ENCODE measurements at regions of chr15 and their contacts with region 1.

Region 1: GRCh38 chr15:79572691-79573404 is 140.7 kb downstream of the MINAR1 start:
- DNase-seq: no peak
- ATAC-seq: no peak
- H3K4me3 ChIP-seq: no peak overlapping the region
- H3K27ac ChIP-seq: no peak overlapping the region
- H3K4me1 ChIP-seq: no peaks in the 10 kb centered on the region
- H3K27me3 ChIP-seq: peaks cover 25% of the 10 kb centered on the region
- CTCF ChIP-seq: no peak

Region 2: GRCh38 chr15:78241007-78241406 is 1331.8 kb before region 1 on chr15:
- CTCF ChIA-PET with region 1: no interaction called
- POLR2A ChIA-PET with region 1: no interaction called
- intact Hi-C with region 1: no loop called
- DNase-seq: peak; percentile 81
- ATAC-seq: peak; percentile 98
- H3K4me3 ChIP-seq: no peak overlapping the region
- H3K27ac ChIP-seq: no peak overlapping the region
- H3K4me1 ChIP-seq: no peaks in the 10 kb centered on the region
- H3K27me3 ChIP-seq: no peaks in the 10 kb centered on the region
- CTCF ChIP-seq: peak; percentile 78

Region 3: GRCh38 chr15:79540558-79540957 is 32.3 kb before region 1 on chr15:
- CTCF ChIA-PET with region 1: no interaction called
- POLR2A ChIA-PET with region 1: no interaction called
- intact Hi-C with region 1: no loop called
- DNase-seq: peak; percentile 18
- ATAC-seq: no peak
- H3K4me3 ChIP-seq: no peak overlapping the region
- H3K27ac ChIP-seq: no peak overlapping the region
- H3K4me1 ChIP-seq: no peaks in the 10 kb centered on the region
- H3K27me3 ChIP-seq: peaks cover 14% of the 10 kb centered on the region; the same call in 1 of the 2 replicates
- CTCF ChIP-seq: peak; percentile 28; the same call in 1 of the 2 replicates

Region 4: GRCh38 chr15:79689030-79689429 is 116.2 kb after region 1 on chr15:
- CTCF ChIA-PET with region 1: no interaction called
- POLR2A ChIA-PET with region 1: no interaction called
- intact Hi-C with region 1: no loop called
- DNase-seq: no peak
- ATAC-seq: no peak
- H3K4me3 ChIP-seq: no peak overlapping the region
- H3K27ac ChIP-seq: no peak overlapping the region
- H3K4me1 ChIP-seq: no peaks in the 10 kb centered on the region
- H3K27me3 ChIP-seq: no peaks in the 10 kb centered on the region
- CTCF ChIP-seq: no peak

Region 5: GRCh38 chr15:79901958-79902357 is 329.1 kb after region 1 on chr15:
- CTCF ChIA-PET with region 1: no interaction called
- POLR2A ChIA-PET with region 1: interaction called, 22 read pairs
- intact Hi-C with region 1: no loop called
- DNase-seq: no peak
- ATAC-seq: no peak
- H3K4me3 ChIP-seq: no peak overlapping the region
- H3K27ac ChIP-seq: no peak overlapping the region
- H3K4me1 ChIP-seq: peaks cover 7% of the 10 kb centered on the region
- H3K27me3 ChIP-seq: no peaks in the 10 kb centered on the region
- CTCF ChIP-seq: no peak

Region 6: GRCh38 chr15:80093854-80094418 is 521.1 kb after region 1 on chr15:
- CTCF ChIA-PET with region 1: no interaction called
- POLR2A ChIA-PET with region 1: no interaction called
- intact Hi-C with region 1: no loop called
- DNase-seq: peak; percentile 67
- ATAC-seq: peak; percentile 66
- H3K4me3 ChIP-seq: no peak overlapping the region
- H3K27ac ChIP-seq: peak overlapping the region; percentile 28; the same call in 1 of the 2 replicates
- H3K4me1 ChIP-seq: peaks cover 9% of the 10 kb centered on the region
- H3K27me3 ChIP-seq: no peaks in the 10 kb centered on the region
- CTCF ChIP-seq: no peak